ENCODE measurements at regions of chr17 and their contacts with region 1.

Region 1: DNA sequence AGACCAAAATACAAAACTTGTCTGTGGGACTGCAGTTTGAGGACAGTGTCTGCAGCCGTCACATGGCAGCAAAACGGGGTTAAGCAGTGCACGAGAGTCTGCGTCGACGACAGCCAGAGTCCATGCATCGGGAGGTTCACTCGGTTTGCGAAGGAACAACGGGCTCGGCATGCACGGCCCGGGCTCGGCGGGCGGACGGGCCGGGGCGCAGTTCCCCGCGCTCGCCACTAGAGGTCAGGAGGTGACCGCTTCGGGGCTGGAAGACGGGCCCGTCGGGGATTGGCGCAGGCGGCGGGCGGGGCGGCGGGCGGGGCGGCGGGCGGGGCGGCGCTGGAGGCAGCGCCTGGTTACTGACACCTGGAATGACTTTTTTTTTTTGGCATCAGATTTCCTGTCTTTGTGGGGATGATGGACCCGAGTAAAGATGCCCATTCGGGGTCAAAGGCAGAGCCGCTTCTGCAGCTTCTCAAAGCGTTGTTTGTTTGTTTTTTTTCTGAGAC is 6.5 kb downstream of the SCGB1C2 start:
- DNase-seq: no peak
- ATAC-seq: peak; percentile 96
- H3K4me3 ChIP-seq: no peak overlapping the region
- H3K27ac ChIP-seq: no peak overlapping the region
- H3K4me1 ChIP-seq: no peaks in the 10 kb centered on the region
- H3K27me3 ChIP-seq: no peaks in the 10 kb centered on the region
- CTCF ChIP-seq: peak; percentile 73 to 86 (median 85)
- EP300 ChIP-seq: no peak
- POLR2A ChIP-seq: no peak
- RAD21 ChIP-seq: peak; percentile 80

Region 2: GRCh38 chr17:309361-309888 is 165.6 kb after region 1 on chr17:
- CTCF ChIA-PET with region 1: interaction called, 3 read pairs
- POLR2A ChIA-PET with region 1: no interaction called
- RAD21 ChIA-PET with region 1: no interaction called
- SMC1A ChIA-PET with region 1: no interaction called
- in situ Hi-C with region 1: no loop called
- intact Hi-C with region 1: loop called (anchors 5 kb)
- DNase-seq: no peak
- ATAC-seq: peak; percentile 93
- H3K4me3 ChIP-seq: no peak overlapping the region
- H3K27ac ChIP-seq: no peak overlapping the region
- H3K4me1 ChIP-seq: no peaks in the 10 kb centered on the region
- H3K27me3 ChIP-seq: no peaks in the 10 kb centered on the region
- CTCF ChIP-seq: peak; percentile 35 to 73 (median 61)
- EP300 ChIP-seq: no peak
- POLR2A ChIP-seq: no peak
- RAD21 ChIP-seq: no peak

Region 3: GRCh38 chr17:393806-394717 is 250.2 kb after region 1 on chr17:
- CTCF ChIA-PET with region 1: no interaction called
- POLR2A ChIA-PET with region 1: no interaction called
- RAD21 ChIA-PET with region 1: no interaction called
- SMC1A ChIA-PET with region 1: no interaction called
- in situ Hi-C with region 1: loop called (anchors 5 kb)
- intact Hi-C with region 1: no loop called
- DNase-seq: no peak
- ATAC-seq: no peak
- H3K4me3 ChIP-seq: no peak overlapping the region
- H3K27ac ChIP-seq: no peak overlapping the region
- H3K4me1 ChIP-seq: no peaks in the 10 kb centered on the region
- H3K27me3 ChIP-seq: no peaks in the 10 kb centered on the region
- CTCF ChIP-seq: no peak
- EP300 ChIP-seq: no peak
- POLR2A ChIP-seq: no peak
- RAD21 ChIP-seq: no peak

Measured in GM12878 (cell line).